Body of pancreas (tissue), 4 donors: ENCODE measurements at regions of chr12 and their contacts with region 1.

Region 1: GRCh38 chr12:94101738-94102660 is 46.4 kb upstream of the PLXNC1 start:
- DNase-seq: peak; percentile 83 to 88 (median 85)
- ATAC-seq: peak; percentile 87
- H3K4me3 ChIP-seq: peak overlapping the region; percentile 40 to 62
- H3K27ac ChIP-seq: no peak overlapping the region
- H3K4me1 ChIP-seq: peaks cover 12% of the 10 kb centered on the region
- H3K27me3 ChIP-seq: no peaks in the 10 kb centered on the region
- CTCF ChIP-seq: peak; percentile 68 to 86 (median 81)
- POLR2A ChIP-seq: no peak

Region 2: DNA sequence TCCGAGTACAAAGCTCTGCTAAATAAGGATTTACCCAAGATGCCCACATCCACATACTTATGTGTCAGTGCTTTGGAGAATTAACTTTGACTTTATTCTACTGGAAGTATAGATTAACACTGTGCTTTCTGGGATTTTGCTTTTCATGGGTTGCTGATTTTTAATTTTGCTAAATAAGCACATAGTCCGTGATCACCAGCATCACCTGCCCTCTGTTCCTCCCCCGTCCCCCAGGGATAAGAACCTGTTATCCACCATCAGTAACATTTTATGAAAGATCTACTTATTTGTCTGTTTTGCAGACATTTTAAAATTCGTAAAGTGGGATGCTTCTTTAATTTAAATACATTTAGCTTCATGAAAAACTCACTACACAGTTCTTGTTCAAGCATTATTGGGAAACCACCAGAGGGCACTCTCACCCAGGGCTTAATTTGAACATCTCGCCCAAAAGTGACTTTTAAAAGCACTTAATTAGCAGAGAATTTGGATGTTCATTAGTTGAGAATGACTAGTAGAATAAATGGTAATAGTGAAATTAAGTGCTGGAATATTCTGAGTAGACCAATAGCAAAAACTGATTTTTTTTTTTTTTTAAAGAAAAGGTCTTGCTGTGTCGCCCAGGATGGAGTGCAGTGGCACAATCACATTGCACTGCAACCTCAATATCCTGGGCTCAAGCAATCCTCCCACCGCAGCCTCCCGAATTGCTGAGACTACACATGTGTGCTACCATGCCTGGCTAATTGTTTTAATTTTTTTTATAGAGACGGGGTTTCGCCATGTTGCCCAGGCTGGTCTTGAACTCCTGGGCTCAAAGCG is 599.0 kb before region 1 on chr12:
- intact Hi-C with region 1: loop called (anchors 5 kb)
- DNase-seq: peak; percentile 25 to 55 (median 46)
- ATAC-seq: no peak
- H3K4me3 ChIP-seq: no peak overlapping the region
- H3K27ac ChIP-seq: no peak overlapping the region
- H3K4me1 ChIP-seq: no peaks in the 10 kb centered on the region
- H3K27me3 ChIP-seq: no peaks in the 10 kb centered on the region
- CTCF ChIP-seq: peak; percentile 56 to 77 (median 72)
- POLR2A ChIP-seq: no peak

Region 3: DNA sequence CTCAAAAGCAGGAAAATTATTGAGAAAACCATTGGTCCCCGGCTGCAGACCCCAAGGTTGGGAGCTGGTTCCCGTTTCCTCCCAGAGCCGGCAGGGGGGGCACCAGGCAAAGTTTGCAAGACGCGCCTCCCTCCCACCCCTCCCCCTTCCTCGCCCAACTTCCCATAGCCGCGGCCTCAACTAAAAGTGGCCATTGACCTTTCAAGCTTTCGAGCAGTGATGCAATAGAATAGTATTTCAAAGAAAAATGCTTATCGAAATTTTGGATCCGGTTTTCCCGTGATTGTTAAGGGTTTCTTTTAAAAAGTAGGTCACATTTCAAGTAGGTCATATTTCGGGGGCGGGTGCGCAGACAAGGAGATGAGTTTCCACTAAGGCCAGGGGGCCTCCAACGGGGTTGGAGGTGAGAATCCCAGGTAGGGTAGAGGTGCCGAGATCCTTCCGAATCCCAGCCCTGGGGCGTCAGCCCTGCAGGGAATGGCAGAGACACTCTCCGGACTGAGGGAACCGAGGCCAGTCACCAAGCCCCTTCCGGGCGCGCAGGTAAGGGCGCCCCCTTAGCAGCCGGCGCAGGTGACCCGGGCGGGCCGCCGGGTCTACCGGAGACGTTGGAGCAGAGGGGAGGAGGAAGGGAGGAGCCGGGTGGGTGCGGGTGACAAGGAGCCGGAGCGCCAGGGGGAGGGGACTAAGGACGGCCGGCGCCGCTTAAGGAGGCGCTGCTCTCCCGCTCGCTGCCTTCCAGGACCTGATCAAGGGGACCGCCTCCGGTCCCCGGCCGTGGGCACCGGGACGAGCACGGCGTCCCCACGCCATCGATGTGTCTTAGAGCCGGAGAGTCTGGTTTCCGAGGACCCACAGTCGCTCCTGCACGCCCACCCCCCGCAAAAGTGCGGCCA is 532.1 kb before region 1 on chr12:
- intact Hi-C with region 1: loop called (anchors 5 kb)
- DNase-seq: peak; percentile 83 to 89 (median 88)
- ATAC-seq: peak; percentile 73
- H3K4me3 ChIP-seq: peak overlapping the region; percentile 14 to 75
- H3K27ac ChIP-seq: peak overlapping the region; percentile 27 to 95 (median 92)
- H3K4me1 ChIP-seq: peaks cover 20% of the 10 kb centered on the region
- H3K27me3 ChIP-seq: no peaks in the 10 kb centered on the region
- CTCF ChIP-seq: peak; percentile 42 to 76 (median 67)
- POLR2A ChIP-seq: no peak